WTC11 (cell line): ENCODE measurements at regions of chr20 and their contacts with region 1.

Region 1: GRCh38 chr20:50790651-50791277 is 4.1 kb upstream of the BCAS4 start:
- DNase-seq: peak; percentile 92
- ATAC-seq: peak; percentile 76
- H3K4me3 Mint-ChIP-seq: no peak overlapping the region
- H3K27ac Mint-ChIP-seq: 0 out of 2 replicates have a peak overlapping the region, but pooled peaks have one; percentile 53
- H3K4me1 Mint-ChIP-seq: peaks cover 26% of the 10 kb centered on the region
- H3K27me3 Mint-ChIP-seq: peaks cover 4% of the 10 kb centered on the region
- CTCF ChIP-seq: peak; percentile 35; the same call in 1 of the 2 replicates

Region 2: DNA sequence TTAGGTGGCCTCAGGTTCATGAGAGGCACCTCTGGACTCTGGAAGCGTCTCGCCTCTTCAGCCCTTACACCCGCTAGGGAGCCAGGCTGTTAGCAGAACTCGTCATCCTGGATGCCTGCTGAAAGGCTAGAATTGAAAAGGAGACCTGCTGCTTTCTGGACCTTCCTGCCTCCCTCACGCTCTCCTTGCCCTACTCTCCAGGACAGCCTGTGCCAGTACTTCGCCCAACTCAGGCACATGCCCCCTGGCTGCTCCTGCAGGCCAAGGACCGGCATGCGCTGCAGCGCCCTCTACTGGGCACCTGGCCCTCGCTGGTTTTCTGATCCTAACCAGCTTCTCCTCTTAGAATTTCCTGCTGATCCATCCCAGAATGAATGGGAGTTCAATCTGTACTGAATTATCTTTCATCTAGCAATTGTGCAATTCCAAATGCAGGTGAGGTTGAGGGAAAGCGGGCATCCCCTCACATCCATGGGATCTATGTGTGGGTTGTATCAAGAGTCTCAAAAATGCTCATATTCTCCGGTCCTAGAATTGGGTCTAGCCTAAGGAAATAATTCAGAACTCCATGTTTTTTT is 202.6 kb before region 1 on chr20:
- CTCF ChIA-PET with region 1: interaction called, 11 read pairs
- POLR2A ChIA-PET with region 1: no interaction called
- DNase-seq: peak; percentile 93
- ATAC-seq: peak; percentile 89
- H3K4me3 Mint-ChIP-seq: no peak overlapping the region
- H3K27ac Mint-ChIP-seq: no peak overlapping the region
- H3K4me1 Mint-ChIP-seq: no peaks in the 10 kb centered on the region
- H3K27me3 Mint-ChIP-seq: no peaks in the 10 kb centered on the region
- CTCF ChIP-seq: peak; percentile 88

Region 3: DNA sequence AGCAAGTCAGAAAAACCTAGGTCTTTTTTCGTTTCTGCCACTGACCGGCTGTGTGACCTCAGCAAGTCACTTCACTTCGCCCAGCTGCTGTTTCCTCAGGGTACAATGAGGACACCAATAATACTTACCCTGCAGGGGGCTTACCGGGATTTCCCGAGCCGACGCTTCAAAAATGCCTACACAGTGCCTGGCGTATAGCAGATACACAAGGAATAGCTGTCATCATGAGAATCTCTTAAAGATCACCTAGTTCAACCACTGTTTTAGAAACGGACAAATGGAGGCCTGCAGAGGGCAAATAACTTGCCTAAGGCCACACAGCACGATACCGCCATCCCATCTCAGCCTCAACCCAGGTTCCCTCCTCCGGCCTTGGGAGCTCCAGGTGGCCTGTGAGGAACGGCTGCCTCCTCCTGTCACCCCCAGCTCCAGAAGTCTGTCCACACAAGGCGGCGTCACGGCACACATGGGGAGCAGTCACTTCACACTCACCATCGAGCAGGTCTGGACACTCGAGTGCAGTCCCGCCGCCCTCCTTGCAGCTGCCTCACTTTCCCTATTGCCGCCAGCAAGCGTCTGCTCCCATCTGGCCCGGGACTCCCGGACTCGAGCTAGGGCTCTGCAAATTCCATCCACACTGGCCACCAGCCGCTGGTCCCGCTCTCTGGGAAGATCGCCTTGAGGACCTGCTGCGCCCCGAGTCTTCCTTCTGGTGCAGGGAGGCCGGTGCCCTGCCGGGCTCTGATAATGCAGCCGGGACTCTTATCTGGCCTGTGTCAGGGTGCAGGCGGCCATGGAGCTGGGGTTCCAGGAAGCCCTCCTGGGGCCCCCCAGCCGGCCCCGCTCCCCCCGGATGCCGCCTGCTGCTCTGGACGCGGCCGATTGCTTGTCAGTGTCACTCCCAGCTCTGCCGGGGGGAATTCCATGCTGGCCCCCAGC is 99.9 kb before region 1 on chr20 and contains the start of gene RIPOR3:
- CTCF ChIA-PET with region 1: interaction called, 13 read pairs
- POLR2A ChIA-PET with region 1: no interaction called
- DNase-seq: peak; percentile 49
- ATAC-seq: peak; percentile 46
- H3K4me3 Mint-ChIP-seq: peak within 1 kb of the TSS; percentile 78
- H3K27ac Mint-ChIP-seq: peak within 1 kb of the TSS; percentile 94
- H3K4me1 Mint-ChIP-seq: peaks cover 53% of the 10 kb centered on the region
- H3K27me3 Mint-ChIP-seq: no peaks in the 10 kb centered on the region
- CTCF ChIP-seq: no peak
- total RNA-seq, gene RIPOR3: 5.4 to 6.5 TPM (median 6.0 TPM) in 3 replicates

Region 4: GRCh38 chr20:50750145-50750671 is 40.6 kb before region 1 on chr20:
- CTCF ChIA-PET with region 1: interaction called, 11 read pairs
- POLR2A ChIA-PET with region 1: no interaction called
- DNase-seq: no peak
- ATAC-seq: no peak
- H3K4me3 Mint-ChIP-seq: no peak overlapping the region
- H3K27ac Mint-ChIP-seq: no peak overlapping the region
- H3K4me1 Mint-ChIP-seq: peaks cover 22% of the 10 kb centered on the region
- H3K27me3 Mint-ChIP-seq: no peaks in the 10 kb centered on the region
- CTCF ChIP-seq: no peak

Region 5: DNA sequence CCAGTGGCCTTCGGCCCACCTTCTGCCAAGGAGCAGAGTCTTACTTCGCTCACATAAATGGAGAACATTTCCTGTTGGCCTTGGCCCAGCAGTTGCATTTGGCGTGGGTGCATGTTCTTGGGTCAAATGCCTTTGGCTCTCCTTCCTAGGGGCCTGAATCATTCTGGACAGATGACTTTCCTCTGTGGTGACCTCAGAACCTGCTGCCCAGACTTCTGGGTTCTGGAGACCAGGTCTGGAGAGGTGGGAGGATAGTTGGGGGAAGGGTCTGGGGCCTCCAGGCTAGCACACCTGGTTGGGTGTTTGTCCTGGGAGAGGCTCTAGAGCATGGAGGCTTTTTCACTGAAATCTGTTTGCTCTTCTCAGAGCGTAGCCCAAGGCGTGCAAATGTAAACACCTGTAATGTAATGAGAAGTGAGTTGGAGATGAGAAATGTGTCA is 33.4 kb after region 1 on chr20:
- CTCF ChIA-PET with region 1: interaction called, 20 read pairs
- POLR2A ChIA-PET with region 1: no interaction called
- DNase-seq: no peak
- ATAC-seq: no peak
- H3K4me3 Mint-ChIP-seq: no peak overlapping the region
- H3K27ac Mint-ChIP-seq: no peak overlapping the region
- H3K4me1 Mint-ChIP-seq: 0 out of 2 replicates have a peak, but pooled peaks cover 8% of the 10 kb centered on the region
- H3K27me3 Mint-ChIP-seq: no peaks in the 10 kb centered on the region; the same call in 1 of the 2 replicates
- CTCF ChIP-seq: no peak

Region 6: GRCh38 chr20:50885781-50886486 is 95.2 kb after region 1 on chr20:
- CTCF ChIA-PET with region 1: interaction called, 31 read pairs
- POLR2A ChIA-PET with region 1: no interaction called
- DNase-seq: no peak
- ATAC-seq: peak; percentile 29
- H3K4me3 Mint-ChIP-seq: no peak overlapping the region
- H3K27ac Mint-ChIP-seq: peak overlapping the region; percentile 70
- H3K4me1 Mint-ChIP-seq: peaks cover 2% of the 10 kb centered on the region
- H3K27me3 Mint-ChIP-seq: no peaks in the 10 kb centered on the region
- CTCF ChIP-seq: no peak

Region 7: DNA sequence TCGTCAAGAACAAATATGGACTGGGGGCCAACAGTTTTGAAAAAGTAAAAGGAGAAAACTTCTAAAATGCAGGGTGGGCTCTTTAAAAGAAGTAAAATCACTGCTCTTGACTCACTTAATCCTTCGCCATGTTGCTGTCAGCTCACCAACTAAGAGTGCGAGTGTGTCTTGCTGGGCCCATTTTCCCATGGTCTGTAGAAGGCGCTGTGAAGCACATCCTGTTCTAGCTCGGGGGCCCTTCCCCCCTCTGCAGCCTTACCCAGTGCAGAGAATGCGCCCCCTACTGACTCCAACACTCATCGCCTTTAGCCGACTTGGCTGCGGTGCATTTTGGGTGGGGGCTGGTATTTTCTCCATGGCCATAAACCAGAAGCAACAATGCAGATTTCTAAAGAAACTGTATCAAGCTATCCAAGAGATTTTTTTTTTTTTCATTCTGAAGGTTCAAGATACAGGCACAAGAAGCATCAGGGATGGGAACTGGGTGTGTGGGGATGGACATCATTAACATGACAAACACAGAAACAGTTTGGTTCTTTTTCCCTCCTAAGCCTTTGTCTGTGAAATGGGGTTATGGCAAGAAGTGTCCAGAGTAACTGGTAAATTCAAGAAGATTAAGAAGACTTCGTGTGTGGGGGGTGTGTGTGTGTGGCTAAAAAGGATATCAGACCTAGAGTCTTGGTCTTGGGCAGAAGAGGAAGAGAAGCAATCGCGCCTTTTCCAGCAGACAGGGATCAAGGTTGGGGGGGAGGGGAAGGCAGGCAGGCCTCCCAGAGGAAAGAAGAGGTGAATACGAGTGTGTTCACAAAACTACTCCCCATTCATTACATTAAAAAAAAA is 138.8 kb after region 1 on chr20:
- CTCF ChIA-PET with region 1: interaction called, 127 read pairs
- POLR2A ChIA-PET with region 1: interaction called, 15 read pairs
- DNase-seq: peak; percentile 94
- ATAC-seq: peak; percentile 79
- H3K4me3 Mint-ChIP-seq: peak overlapping the region; percentile 88
- H3K27ac Mint-ChIP-seq: peak overlapping the region; percentile 97
- H3K4me1 Mint-ChIP-seq: peaks cover 57% of the 10 kb centered on the region
- H3K27me3 Mint-ChIP-seq: no peaks in the 10 kb centered on the region
- CTCF ChIP-seq: peak; percentile 68